ENCODE measurements at regions of chr1 and their contacts with region 1.

Region 1: GRCh38 chr1:27519331-27520258 is 29.6 kb upstream of the WASF2 start:
- DNase-seq: no peak
- H3K4me3 ChIP-seq: no peak overlapping the region
- H3K27ac ChIP-seq: peak overlapping the region; percentile 5 to 21
- H3K4me1 ChIP-seq: peaks cover 12 to 22% of the 10 kb centered on the region in 2 donors
- H3K27me3 ChIP-seq: no peaks in the 10 kb centered on the region
- CTCF ChIP-seq: no peak

Region 2: DNA sequence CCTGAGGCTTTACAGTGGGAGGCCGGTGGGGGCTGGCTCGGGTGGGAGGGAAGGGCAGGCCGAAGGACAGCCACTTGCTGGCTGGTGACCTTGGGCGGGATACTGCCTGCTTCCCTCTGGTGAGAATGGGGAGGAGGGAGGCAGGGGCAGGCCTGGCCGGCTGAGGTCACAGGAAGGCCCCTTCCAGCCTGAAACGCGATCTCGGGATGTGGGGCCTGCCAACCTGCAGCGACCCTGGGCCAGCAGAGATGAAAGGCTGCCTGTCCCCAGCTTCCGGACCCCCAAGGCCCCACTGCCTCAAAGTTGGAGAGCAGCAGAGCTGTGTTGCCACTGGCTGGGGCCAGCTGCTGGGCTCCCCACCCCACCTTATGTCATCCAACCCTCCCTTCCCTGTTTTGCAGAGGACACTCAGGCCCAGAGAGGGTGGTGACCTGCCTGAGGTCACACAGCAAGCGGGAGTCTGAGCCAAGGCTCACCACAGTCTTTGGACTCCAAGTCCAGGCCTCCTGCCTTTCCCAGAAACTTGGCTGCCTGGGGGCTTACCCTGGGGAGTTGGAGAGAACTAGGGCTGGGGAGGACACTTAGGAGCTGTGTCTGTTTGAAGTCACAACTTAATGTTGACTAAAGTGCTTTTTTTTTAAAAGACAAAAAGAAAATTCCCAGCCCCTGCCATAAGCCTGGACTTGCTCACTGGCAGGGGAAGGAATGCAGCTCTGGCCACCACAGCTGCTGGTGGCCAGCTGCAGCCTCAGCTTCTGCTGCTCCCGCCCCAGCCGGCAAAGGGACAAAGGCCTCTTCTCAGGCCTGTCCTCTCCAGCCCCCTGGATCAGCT is 14.8 kb before region 1 on chr1:
- intact Hi-C with region 1: loop called (anchors 2 kb)
- DNase-seq: peak in 1 of 2 donors; percentile 79
- H3K4me3 ChIP-seq: peak overlapping the region in 1 of 2 donors; percentile 9
- H3K27ac ChIP-seq: peak overlapping the region; percentile 88 to 92
- H3K4me1 ChIP-seq: peaks cover 14 to 19% of the 10 kb centered on the region in 2 donors
- H3K27me3 ChIP-seq: no peaks in the 10 kb centered on the region
- CTCF ChIP-seq: no peak